Panc1 (cell line): ENCODE measurements at regions of chr11 and their contacts with region 1.

Region 1: DNA sequence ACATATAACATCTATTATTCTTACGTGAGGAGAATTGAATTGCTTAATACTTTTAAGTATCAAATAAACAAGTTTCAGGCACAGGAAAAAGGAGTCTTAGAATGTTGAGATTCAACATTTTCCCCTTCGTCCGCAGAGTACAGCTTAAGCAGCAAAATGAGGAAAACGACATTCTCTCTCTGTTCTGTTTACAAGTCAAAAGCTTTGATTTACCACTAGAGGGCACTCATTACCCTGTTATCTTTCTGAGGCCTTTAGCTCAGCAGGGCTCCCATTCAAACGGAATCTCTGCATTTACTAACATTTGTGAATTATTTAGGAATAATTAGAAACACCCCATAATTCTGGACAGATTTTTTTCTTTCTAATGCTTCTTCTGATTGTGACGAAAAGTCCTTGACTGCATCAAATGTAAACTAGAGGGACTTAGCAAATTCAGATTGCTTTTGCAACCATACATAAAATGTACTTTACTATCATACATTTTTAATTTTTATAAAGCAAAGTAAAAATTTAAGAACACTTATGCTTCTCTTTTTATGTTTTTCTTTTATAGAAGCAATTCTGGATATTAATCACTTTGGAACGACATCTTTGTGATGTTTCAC is 75.0 kb downstream of the JRKL start:
- DNase-seq: peak; percentile 51
- ATAC-seq: peak; percentile 89
- H3K4me3 ChIP-seq: no peak overlapping the region
- H3K27ac ChIP-seq: no peak overlapping the region
- H3K4me1 ChIP-seq: peaks cover 4% of the 10 kb centered on the region; the same call in 1 of the 2 replicates
- H3K27me3 ChIP-seq: peaks cover 7% of the 10 kb centered on the region
- CTCF ChIP-seq: peak; percentile 63; the same call in 1 of the 2 replicates

Region 2: DNA sequence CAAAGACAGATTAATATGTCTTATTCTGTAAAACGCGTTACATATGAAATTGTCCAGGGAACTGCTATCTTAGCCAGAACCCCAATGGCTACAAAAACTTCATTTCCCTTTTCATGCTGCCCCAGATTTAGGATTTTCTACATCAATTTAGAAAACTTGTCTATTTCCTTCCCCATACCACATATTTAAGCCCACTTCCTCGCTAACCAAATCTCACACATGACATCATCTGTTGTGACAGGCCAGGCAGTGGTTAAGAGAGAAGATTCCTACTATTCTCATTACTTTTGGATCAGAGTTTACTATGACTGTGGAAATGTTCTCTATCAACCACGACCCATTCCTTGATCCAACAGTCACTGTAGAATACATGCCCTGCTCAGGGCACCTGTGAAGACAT is 91.0 kb before region 1 on chr11:
- CTCF ChIA-PET with region 1: no interaction called
- POLR2A ChIA-PET with region 1: no interaction called
- in situ Hi-C with region 1: no loop called
- intact Hi-C with region 1: no loop called
- DNase-seq: no peak
- ATAC-seq: no peak
- H3K4me3 ChIP-seq: no peak overlapping the region
- H3K27ac ChIP-seq: no peak overlapping the region
- H3K4me1 ChIP-seq: no peaks in the 10 kb centered on the region
- H3K27me3 ChIP-seq: no peaks in the 10 kb centered on the region
- CTCF ChIP-seq: no peak

Region 3: DNA sequence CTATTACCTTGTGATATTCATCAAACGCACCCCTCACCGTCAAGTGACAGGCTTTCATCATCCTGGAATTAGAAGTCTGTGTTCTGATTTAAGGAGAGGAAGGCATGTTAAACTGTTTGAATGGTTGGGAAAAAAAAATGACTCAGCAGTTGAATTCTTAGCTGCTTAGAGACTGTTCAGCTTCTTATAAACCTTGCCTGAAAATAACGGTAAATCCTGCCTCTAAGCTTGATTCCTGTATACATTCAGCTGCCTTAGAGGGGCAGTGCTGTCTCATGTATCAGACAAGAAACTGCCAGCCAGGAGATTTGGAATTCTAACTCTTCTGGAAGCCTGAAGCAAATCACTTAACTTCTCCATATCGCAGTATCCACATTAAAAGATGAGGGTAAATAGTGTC is 362.4 kb after region 1 on chr11:
- CTCF ChIA-PET with region 1: interaction called, 3 read pairs
- POLR2A ChIA-PET with region 1: no interaction called
- in situ Hi-C with region 1: no loop called
- intact Hi-C with region 1: loop called (anchors 10 kb)
- DNase-seq: no peak
- ATAC-seq: no peak
- H3K4me3 ChIP-seq: no peak overlapping the region
- H3K27ac ChIP-seq: no peak overlapping the region
- H3K4me1 ChIP-seq: no peaks in the 10 kb centered on the region
- H3K27me3 ChIP-seq: no peaks in the 10 kb centered on the region
- CTCF ChIP-seq: peak; percentile 15; the same call in 1 of the 2 replicates

Region 4: DNA sequence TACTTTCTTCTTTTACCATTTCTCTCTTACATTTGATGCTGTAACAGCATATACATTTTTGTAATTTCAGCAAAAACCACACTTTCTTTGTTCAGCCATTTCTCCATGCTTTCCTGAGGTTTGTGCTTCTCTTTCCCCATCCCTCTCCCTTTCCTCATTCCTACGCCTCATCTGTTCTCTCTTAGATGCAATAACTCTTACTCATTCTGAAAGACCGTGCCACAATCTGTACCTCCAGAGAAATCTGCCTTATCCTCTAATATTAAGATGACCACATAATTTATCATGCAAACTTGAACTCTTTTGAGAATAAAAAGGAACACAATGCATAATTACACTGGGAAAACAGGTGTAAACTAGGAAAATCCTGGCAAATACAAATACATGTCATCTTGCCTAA is 513.9 kb after region 1 on chr11:
- CTCF ChIA-PET with region 1: no interaction called
- POLR2A ChIA-PET with region 1: no interaction called
- in situ Hi-C with region 1: no loop called
- intact Hi-C with region 1: loop called (anchors 10 kb)
- DNase-seq: no peak
- ATAC-seq: no peak
- H3K4me3 ChIP-seq: no peak overlapping the region
- H3K27ac ChIP-seq: no peak overlapping the region
- H3K4me1 ChIP-seq: no peaks in the 10 kb centered on the region
- H3K27me3 ChIP-seq: no peaks in the 10 kb centered on the region
- CTCF ChIP-seq: no peak

Region 5: GRCh38 chr11:97140885-97141494 is 676.2 kb after region 1 on chr11:
- CTCF ChIA-PET with region 1: interaction called, 11 read pairs
- POLR2A ChIA-PET with region 1: no interaction called
- in situ Hi-C with region 1: no loop called
- intact Hi-C with region 1: loop called (anchors 5 kb)
- DNase-seq: no peak
- ATAC-seq: no peak
- H3K4me3 ChIP-seq: no peak overlapping the region
- H3K27ac ChIP-seq: no peak overlapping the region
- H3K4me1 ChIP-seq: no peaks in the 10 kb centered on the region
- H3K27me3 ChIP-seq: no peaks in the 10 kb centered on the region
- CTCF ChIP-seq: peak; percentile 55; the same call in 1 of the 2 replicates

Region 6: DNA sequence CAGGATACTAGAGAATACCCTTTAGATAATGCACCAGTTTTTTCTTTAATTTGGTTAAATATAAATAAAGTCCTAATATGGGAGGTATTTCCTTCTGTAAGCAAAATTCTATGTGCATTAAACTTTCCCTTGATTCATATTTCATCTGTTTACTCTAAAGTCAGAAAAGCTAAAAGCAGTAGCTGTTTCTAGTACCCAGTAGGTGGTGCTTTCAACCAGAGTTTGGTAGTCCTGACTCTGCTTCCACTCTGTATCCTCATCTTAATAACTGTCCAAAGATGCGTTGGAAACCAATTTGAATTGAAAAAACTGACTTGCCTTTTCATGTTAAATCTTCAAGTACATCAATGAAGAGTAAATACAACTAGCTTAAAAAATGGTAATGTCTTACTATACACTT is 990.2 kb after region 1 on chr11:
- CTCF ChIA-PET with region 1: no interaction called
- POLR2A ChIA-PET with region 1: no interaction called
- in situ Hi-C with region 1: no loop called
- intact Hi-C with region 1: loop called (anchors 10 kb)
- DNase-seq: no peak
- ATAC-seq: no peak
- H3K4me3 ChIP-seq: no peak overlapping the region
- H3K27ac ChIP-seq: no peak overlapping the region
- H3K4me1 ChIP-seq: no peaks in the 10 kb centered on the region
- H3K27me3 ChIP-seq: no peaks in the 10 kb centered on the region
- CTCF ChIP-seq: peak; percentile 31; the same call in 1 of the 2 replicates

Region 7: GRCh38 chr11:98455500-98456307 is 1990.9 kb after region 1 on chr11:
- CTCF ChIA-PET with region 1: no interaction called
- POLR2A ChIA-PET with region 1: interaction called, 10 read pairs
- in situ Hi-C with region 1: no loop called
- intact Hi-C with region 1: no loop called
- DNase-seq: no peak
- ATAC-seq: no peak
- H3K4me3 ChIP-seq: no peak overlapping the region
- H3K27ac ChIP-seq: no peak overlapping the region
- H3K4me1 ChIP-seq: no peaks in the 10 kb centered on the region
- H3K27me3 ChIP-seq: no peaks in the 10 kb centered on the region
- CTCF ChIP-seq: peak; percentile 25